ENCODE measurements at regions of chr20 and their contacts with region 1.

Region 1: GRCh38 chr20:35303735-35304491 is 11.7 kb upstream of the FAM83C start:
- DNase-seq: peak; percentile 88
- CTCF ChIP-seq: peak; percentile 81

Region 2: DNA sequence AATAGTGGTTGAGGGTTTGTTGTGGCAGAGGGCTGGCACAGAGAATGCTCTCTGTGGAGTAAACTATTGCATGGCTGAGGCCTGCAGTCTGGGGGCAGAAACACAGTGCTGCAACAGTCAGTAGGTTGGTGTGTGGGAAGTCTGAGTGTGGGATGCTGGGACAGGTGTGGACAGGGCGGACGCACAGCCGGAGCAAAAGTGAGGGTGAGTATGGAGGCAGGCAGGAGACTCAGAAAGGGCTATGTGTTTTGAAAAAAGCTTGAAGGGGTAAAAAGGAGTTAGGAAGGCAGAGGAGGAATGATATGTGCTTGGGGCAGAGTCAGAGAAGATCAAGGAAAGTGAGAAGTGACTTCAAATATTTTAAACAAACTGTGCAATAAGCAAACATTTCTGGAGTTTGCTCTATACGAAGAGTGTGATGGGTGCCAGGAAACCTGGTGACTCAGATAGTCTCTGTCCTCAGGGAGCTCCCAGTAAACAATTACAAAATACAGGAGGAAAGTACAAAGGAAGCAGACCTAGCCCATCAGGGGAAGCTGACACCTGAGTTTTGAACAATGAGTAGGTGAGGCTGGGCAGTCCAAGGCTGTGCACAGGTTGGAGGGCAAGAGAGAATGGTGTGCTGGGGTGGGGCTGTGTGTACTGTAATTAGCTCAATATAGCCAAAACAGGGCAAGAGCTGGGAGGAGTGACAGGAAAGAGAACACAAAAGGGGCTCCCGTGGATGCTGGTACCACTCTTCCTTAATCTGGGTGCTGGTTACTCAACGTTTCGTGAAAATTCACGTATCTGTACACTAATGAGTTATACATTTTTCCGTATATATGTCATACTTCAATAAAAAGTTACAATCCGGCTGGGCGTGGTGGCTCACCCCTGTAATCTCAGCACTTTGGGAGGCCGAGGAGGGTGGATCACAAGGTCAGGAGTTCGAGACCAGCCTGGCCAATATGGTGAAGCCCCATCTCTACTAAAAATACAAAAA is 682.2 kb before region 1 on chr20:
- CTCF ChIA-PET with region 1: no interaction called
- POLR2A ChIA-PET with region 1: no interaction called
- DNase-seq: no peak
- CTCF ChIP-seq: no peak

Region 3: DNA sequence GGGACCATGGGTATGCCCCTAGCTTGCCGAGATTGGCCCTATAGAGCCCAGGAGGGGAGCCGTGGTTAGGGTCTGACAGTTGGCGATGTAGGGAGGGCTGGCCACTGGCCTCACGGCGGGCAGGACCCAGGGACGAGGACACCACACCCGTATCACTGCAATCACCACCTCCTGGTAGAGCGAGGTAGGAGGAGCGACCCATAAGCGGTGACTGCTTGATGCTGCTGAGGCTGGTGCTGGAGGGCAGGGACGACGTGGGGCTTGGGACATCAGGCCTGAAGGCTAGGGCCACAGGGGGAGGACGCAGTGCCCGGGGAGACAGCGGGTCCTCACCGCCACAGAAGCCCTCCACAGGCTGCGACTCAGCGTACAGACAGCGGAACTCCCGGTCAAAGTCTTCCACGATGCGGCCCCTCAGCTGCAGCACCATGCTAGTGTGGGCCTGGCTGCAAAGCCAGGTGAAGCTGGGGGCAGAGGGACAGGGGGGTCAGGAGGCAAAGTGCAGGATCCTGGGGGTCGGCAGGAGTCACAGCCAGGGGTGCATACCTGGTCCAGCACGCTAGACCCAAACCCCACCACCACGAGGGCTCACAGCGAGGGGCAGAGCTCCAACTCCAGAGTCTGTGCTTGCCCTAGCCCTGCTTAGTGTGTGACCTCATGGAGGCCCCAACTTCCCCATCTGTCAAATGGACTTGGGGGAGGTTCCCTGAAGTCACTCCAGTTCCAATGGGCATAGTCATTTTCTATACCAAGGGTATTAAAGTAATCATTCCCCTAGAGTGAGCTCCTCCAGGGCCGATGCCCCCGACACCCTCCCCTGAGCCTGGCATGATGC is 16.2 kb before region 1 on chr20:
- CTCF ChIA-PET with region 1: interaction called, 108 read pairs
- POLR2A ChIA-PET with region 1: interaction called, 6 read pairs
- DNase-seq: no peak
- CTCF ChIP-seq: no peak

Region 4: DNA sequence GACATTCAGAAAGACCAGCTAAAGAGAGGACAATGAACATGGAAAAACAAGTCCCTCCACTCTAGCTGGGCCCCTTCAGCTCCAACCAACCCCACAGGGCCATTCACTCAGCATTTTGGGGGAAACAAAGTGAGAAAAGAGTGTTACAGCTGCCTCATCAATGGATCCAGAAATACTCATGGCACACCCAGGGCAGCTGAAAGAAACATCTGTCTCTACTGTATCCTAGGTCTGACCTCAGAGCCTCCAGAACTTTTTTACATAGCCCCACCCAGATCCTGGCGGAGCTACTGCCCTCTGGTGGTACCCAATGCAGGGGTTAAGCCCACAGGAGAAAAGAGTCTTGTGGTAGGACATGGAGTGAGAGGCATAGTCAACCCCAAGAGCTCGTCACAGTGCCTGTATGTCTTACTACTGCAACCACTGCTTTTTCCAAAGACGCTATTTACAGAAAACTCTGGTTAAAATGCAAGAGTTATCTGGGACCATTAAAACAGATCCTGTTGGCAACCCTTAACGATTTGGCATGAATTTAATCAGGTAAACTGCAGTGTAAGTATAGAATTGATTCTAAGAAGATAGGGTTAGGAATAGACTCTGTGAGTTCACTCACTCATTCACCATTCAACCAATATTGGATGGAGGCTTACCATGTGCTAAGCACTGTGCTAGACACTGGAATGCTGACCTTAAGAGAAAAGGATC is 25.7 kb after region 1 on chr20:
- CTCF ChIA-PET with region 1: interaction called, 40 read pairs
- POLR2A ChIA-PET with region 1: no interaction called
- DNase-seq: peak; percentile 41
- CTCF ChIP-seq: peak; percentile 40

Region 5: GRCh38 chr20:35437491-35437998 is 133.6 kb after region 1 on chr20:
- CTCF ChIA-PET with region 1: interaction called, 50 read pairs
- POLR2A ChIA-PET with region 1: no interaction called
- DNase-seq: no peak
- CTCF ChIP-seq: no peak

Region 6: GRCh38 chr20:35454881-35455609 is 151.1 kb after region 1 on chr20 and contains the start of gene CEP250:
- CTCF ChIA-PET with region 1: interaction called, 12 read pairs
- POLR2A ChIA-PET with region 1: no interaction called
- DNase-seq: peak; percentile 98
- CTCF ChIP-seq: no peak

Region 7: GRCh38 chr20:35541783-35542588 is 238.1 kb after region 1 on chr20 and contains the start of gene ERGIC3:
- CTCF ChIA-PET with region 1: no interaction called
- POLR2A ChIA-PET with region 1: no interaction called
- DNase-seq: peak; percentile 97
- CTCF ChIP-seq: no peak

Measured in GM10248 (cell line).